CD8-positive, alpha-beta T cell (primary cell): ENCODE measurements at regions of chr10 and their contacts with region 1.

Region 1: DNA sequence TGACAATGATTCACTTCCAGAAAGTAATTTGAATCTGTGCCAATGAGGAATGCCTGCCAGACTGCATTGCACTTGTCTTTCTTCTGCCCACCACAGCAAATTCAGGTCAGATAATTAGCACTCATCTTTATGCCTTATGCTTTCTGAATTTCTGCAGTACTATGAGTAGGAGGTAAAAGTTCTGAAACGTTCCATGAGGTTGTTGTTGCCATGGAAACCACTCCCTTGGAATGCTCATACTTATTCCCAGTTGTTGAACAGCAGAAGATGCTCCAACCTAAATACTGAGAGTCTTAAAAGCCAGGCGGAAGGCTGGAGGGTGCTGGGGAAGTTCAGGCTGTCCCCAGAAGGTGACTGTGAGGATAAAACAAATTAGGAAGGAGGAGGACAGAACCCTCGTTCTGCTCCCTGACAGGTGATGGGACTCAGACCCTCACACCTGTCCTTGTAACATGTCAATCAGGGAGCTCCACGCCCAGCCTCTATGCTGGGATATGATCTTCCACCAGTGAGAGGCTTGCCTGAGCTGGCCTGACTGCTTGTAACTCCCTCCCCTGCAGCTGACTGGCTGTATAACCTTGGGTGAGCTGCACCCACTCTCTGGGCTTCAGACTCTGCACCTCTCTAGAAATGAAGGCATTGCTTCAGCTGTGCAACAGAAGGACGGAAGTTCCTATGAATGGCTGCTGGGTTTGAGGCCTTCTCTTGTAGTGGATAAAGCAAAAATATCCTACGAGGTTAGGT is 554.3 kb upstream of the MGMT start:
- DNase-seq: no peak
- ATAC-seq: no peak
- H3K4me3 ChIP-seq: no peak overlapping the region
- H3K4me3 Mint-ChIP-seq: no peak overlapping the region
- H3K27ac ChIP-seq: no peak overlapping the region
- H3K27ac Mint-ChIP-seq: no peak overlapping the region
- H3K4me1 ChIP-seq: no peaks in the 10 kb centered on the region
- H3K4me1 Mint-ChIP-seq: no peaks in the 10 kb centered on the region
- H3K27me3 ChIP-seq: no peaks in the 10 kb centered on the region
- H3K27me3 Mint-ChIP-seq: no peaks in the 10 kb centered on the region
- CTCF ChIP-seq: no peak

Region 2: GRCh38 chr10:128898133-128898915 is 14.4 kb before region 1 on chr10:
- CTCF ChIA-PET with region 1: no interaction called
- POLR2A ChIA-PET with region 1: no interaction called
- intact Hi-C with region 1: loop called in 1 of 2 experiments (anchors 1 kb)
- DNase-seq: no peak
- ATAC-seq: no peak
- H3K4me3 ChIP-seq: no peak overlapping the region
- H3K4me3 Mint-ChIP-seq: no peak overlapping the region
- H3K27ac ChIP-seq: no peak overlapping the region
- H3K27ac Mint-ChIP-seq: no peak overlapping the region
- H3K4me1 ChIP-seq: no peaks in the 10 kb centered on the region
- H3K4me1 Mint-ChIP-seq: no peaks in the 10 kb centered on the region
- H3K27me3 ChIP-seq: no peaks in the 10 kb centered on the region
- H3K27me3 Mint-ChIP-seq: no peaks in the 10 kb centered on the region
- CTCF ChIP-seq: no peak